Activated CD8-positive, alpha-beta T cell treated with anti-CD3 and anti-CD28 coated beads for 36 hours (primary cell): ENCODE measurements at regions of chr17 and their contacts with region 1.

Region 1: GRCh38 chr17:68205251-68205807 is 42.5 kb upstream of the AMZ2 start:
- DNase-seq: peak; percentile 95
- ATAC-seq: peak; percentile 78
- H3K4me3 Mint-ChIP-seq: peak overlapping the region; percentile 87
- H3K27ac Mint-ChIP-seq: peak overlapping the region; percentile 88
- H3K4me1 Mint-ChIP-seq: peaks cover 24% of the 10 kb centered on the region
- H3K27me3 Mint-ChIP-seq: peaks cover 7% of the 10 kb centered on the region
- CTCF ChIP-seq: peak; percentile 88

Region 2: GRCh38 chr17:68057531-68057952 is 147.8 kb before region 1 on chr17:
- CTCF ChIA-PET with region 1: interaction called, 12 read pairs
- POLR2A ChIA-PET with region 1: no interaction called
- intact Hi-C with region 1: no loop called
- DNase-seq: peak; percentile 70
- ATAC-seq: peak; percentile 86
- H3K4me3 Mint-ChIP-seq: no peak overlapping the region
- H3K27ac Mint-ChIP-seq: no peak overlapping the region
- H3K4me1 Mint-ChIP-seq: peaks cover 5% of the 10 kb centered on the region
- H3K27me3 Mint-ChIP-seq: no peaks in the 10 kb centered on the region
- CTCF ChIP-seq: peak; percentile 57

Region 3: GRCh38 chr17:68184816-68185436 is 20.4 kb before region 1 on chr17:
- CTCF ChIA-PET with region 1: interaction called, 73 read pairs
- POLR2A ChIA-PET with region 1: interaction called, 77 read pairs
- intact Hi-C with region 1: no loop called
- DNase-seq: peak; percentile 79
- ATAC-seq: peak; percentile 81
- H3K4me3 Mint-ChIP-seq: peak overlapping the region; percentile 53
- H3K27ac Mint-ChIP-seq: peak overlapping the region; percentile 83
- H3K4me1 Mint-ChIP-seq: peaks cover 61% of the 10 kb centered on the region
- H3K27me3 Mint-ChIP-seq: no peaks in the 10 kb centered on the region
- CTCF ChIP-seq: no peak

Region 4: GRCh38 chr17:68247445-68248198 is 42.3 kb after region 1 on chr17 and contains the start of gene AMZ2:
- CTCF ChIA-PET with region 1: interaction called, 20 read pairs
- POLR2A ChIA-PET with region 1: interaction called, 27 read pairs
- intact Hi-C with region 1: loop called (anchors 5 kb)
- DNase-seq: peak; percentile 95
- ATAC-seq: peak; percentile 88
- H3K4me3 Mint-ChIP-seq: peak within 1 kb of the TSS; percentile 87
- H3K27ac Mint-ChIP-seq: peak within 1 kb of the TSS; percentile 98
- H3K4me1 Mint-ChIP-seq: peaks cover 42% of the 10 kb centered on the region
- H3K27me3 Mint-ChIP-seq: no peaks in the 10 kb centered on the region
- CTCF ChIP-seq: no peak
- total RNA-seq, gene AMZ2: 132 to 141 TPM

Region 5: DNA sequence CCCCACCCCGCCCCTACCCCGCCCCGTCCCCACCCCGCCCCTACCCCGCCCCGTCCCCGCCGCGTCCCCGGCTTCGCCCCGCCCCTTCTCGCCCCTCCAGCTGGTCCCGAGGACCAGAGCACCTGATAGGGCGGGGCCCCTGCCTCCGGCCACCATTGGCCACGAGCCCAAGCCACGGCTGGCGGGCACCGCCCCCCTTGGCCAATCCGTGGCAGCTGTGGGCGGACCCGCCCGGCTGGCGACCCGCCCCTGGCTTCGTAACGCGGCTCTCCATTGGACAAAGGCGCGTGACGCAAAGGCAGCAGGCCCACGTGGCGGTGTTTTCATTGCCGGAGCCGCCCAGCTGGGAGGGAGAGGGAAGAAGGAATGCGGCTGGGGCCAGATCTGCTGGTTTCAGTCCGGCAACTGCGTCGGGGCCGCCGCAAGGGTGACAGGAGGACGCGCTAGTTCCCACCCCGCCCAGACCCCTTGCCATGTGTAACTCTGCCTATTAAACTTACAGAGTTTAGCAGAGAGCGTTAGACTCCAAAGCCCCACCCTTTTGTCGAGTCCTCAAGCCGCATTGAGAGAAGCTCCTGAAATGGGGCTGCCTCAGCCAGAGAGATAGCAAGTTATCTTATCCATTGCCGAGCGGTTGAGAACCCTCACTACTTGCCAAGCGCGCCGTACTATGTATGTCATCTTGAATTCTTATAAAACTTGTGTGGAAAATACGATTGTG is 252.4 kb after region 1 on chr17:
- CTCF ChIA-PET with region 1: interaction called, 15 read pairs
- POLR2A ChIA-PET with region 1: no interaction called
- intact Hi-C with region 1: no loop called
- DNase-seq: peak; percentile 98
- ATAC-seq: peak; percentile 93
- H3K4me3 Mint-ChIP-seq: peak overlapping the region; percentile 83
- H3K27ac Mint-ChIP-seq: peak overlapping the region; percentile 30
- H3K4me1 Mint-ChIP-seq: peaks cover 57% of the 10 kb centered on the region
- H3K27me3 Mint-ChIP-seq: no peaks in the 10 kb centered on the region
- CTCF ChIP-seq: no peak